Stomach (tissue), 19 donors: ENCODE measurements at regions of chr19 and their contacts with region 1.

Region 1: DNA sequence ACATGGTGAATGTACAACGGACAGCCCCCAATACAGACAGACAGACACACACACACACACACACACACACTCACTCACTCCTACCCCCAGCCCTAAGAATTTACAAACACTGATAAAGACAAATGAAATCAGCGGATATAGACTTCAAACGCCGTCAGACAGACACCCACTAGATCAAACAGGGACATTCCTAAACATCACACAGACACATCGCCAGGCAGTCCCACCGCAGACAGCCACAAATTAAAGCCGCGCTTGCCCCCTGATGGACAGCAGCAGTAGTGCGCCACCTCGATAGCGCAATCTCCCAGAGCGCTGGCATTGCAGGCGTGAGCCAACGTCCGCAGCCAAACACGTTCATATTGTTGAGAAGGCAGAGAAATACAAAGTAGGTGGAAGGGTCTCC is 24.7 kb upstream of the ADGRE1 start:
- DNase-seq: peak; percentile 78 to 90
- H3K4me3 ChIP-seq: peak overlapping the region; percentile 25 to 37 (median 30)
- H3K27ac ChIP-seq: peak overlapping the region in 1 of 5 donors; percentile 59
- H3K4me1 ChIP-seq: peaks cover 0 to 13% (median 8%) of the 10 kb centered on the region in 4 donors
- H3K27me3 ChIP-seq: peaks cover 0 to 34% (median 0%) of the 10 kb centered on the region in 3 donors
- CTCF ChIP-seq: peak in 5 of 7 experiments; percentile 70 to 83 (median 75)
- EP300 ChIP-seq: no peak
- POLR2A ChIP-seq: no peak

Region 2: DNA sequence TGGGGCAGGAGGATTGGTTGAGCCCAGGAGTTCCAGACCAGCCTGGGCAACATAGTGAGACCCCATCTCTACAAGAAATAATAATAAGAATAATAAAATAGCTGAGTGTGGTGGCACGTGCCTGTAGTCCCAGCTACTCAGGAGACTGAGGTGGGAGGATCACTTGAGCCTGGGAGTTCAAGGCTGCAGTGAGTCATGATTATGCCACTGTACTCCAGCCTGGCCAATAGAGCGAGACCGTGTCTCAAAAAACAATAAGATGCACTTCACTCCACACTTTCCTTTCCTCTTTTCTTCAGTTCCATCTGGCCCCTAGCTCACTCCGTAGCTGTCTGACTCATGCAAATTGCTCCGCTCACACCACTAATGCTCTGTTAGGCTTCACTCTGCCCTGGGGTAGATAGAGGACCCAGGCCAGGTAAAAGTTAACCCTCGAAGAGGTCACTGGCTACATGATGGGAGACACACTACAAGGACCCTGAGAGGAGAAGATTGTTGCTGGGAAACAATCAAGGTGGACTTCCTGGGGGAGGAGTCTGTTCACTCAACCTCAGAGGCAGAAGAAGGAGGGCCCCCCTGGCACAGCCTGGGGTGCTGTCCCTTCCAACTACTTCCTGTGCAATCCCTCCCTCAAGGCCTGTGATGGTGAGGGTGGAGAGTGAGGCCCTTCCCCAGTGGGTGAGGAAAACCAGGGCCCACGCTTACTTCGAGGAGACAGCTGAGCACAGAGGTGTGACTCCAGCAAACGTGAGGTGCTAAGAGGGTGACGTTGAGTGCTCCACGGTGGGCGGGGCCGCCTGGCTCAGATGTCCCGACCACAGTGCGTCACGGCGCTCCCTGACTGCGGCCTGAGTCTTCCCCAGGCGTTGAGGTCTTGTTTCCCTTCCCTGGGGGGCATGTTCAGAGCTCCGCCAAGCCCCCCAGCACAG is 340.7 kb before region 1 on chr19:
- intact Hi-C with region 1: loop called (anchors 10 kb)
- DNase-seq: peak; percentile 46 to 48
- H3K4me3 ChIP-seq: no peak overlapping the region
- H3K27ac ChIP-seq: no peak overlapping the region
- H3K4me1 ChIP-seq: peaks cover 0 to 22% (median 6%) of the 10 kb centered on the region in 4 donors
- H3K27me3 ChIP-seq: peaks cover 0 to 14% (median 0%) of the 10 kb centered on the region in 3 donors
- CTCF ChIP-seq: no peak
- EP300 ChIP-seq: no peak
- POLR2A ChIP-seq: no peak

Region 3: GRCh38 chr19:6737284-6738046 is 125.2 kb before region 1 on chr19 and contains the start of gene GPR108:
- intact Hi-C with region 1: loop called (anchors 10 kb)
- DNase-seq: peak; percentile 99 to 100
- H3K4me3 ChIP-seq: peak within 1 kb of the TSS; percentile 78 to 91 (median 84)
- H3K27ac ChIP-seq: peak within 1 kb of the TSS; percentile 93 to 99 (median 97)
- H3K4me1 ChIP-seq: peaks cover 37 to 63% (median 54%) of the 10 kb centered on the region in 4 donors
- H3K27me3 ChIP-seq: no peaks in the 10 kb centered on the region
- CTCF ChIP-seq: no peak
- EP300 ChIP-seq: no peak
- POLR2A ChIP-seq: no peak
- total RNA-seq, gene GPR108: 28.1 to 78.6 (median 54.2) TPM